Breast epithelium (tissue), 4 donors: ENCODE measurements at regions of chr12 and their contacts with region 1.

Region 1: DNA sequence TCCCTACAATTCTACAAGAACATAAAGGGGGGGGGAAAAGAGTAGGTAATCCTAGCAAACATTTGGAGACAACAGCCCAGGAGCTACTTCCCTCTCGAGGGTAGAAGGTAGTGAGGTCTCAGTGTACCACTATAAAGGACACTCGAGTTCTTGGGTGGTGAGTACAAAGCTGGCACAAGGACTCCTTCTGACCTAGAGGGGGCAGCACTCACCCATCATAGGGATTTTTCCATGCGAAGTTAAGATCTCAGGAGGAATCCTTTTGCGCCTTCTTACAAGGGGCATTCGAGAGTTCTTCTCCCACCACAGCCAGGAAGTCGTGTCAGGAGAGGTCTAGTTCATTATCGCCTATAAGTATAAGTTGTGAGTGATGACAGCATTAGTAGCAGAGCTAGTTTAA is 200.2 kb upstream of the RBM19 start:
- DNase-seq: no peak
- H3K4me3 ChIP-seq: no peak overlapping the region
- H3K27ac ChIP-seq: no peak overlapping the region
- H3K4me1 ChIP-seq: no peaks in the 10 kb centered on the region
- H3K27me3 ChIP-seq: peaks cover 0 to 7% of the 10 kb centered on the region in 2 donors
- CTCF ChIP-seq: peak in 1 of 3 donors; percentile 37
- POLR2A ChIP-seq: no peak

Region 2: GRCh38 chr12:115199831-115200230 is 1033.5 kb after region 1 on chr12:
- intact Hi-C with region 1: loop called (anchors 10 kb)
- DNase-seq: no peak
- H3K4me3 ChIP-seq: no peak overlapping the region
- H3K27ac ChIP-seq: peak overlapping the region in 1 of 2 donors; percentile 52
- H3K4me1 ChIP-seq: no peaks in the 10 kb centered on the region
- H3K27me3 ChIP-seq: no peaks in the 10 kb centered on the region
- CTCF ChIP-seq: no peak
- POLR2A ChIP-seq: no peak